Naive thymus-derived CD4-positive, alpha-beta T cell (primary cell): ENCODE measurements at regions of chr3 and their contacts with region 1.

Region 1: DNA sequence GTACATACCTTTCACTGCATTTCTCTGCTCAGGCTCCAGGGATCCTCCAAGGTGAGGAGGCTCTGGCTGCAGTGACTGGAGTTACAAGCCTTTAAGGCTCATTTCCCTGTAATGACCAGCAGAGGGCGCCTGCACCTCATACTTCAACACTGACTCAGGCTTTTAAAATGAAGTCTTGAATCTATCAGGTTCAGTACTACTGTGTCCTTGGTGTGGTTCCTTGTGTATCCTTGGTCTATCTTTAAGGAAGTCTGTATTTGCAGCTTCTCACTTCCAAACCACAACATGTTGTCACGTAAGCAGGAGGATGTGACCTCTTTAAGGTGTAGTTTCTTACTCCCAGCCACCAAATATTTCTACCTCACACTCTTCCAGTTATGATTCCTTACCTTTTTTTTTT is 122.5 kb upstream of the ZBED2 start:
- DNase-seq: peak; percentile 27 to 69 (median 60)
- ATAC-seq: peak; percentile 95
- H3K4me3 ChIP-seq: no peak overlapping the region
- H3K4me3 Mint-ChIP-seq: no peak overlapping the region
- H3K27ac ChIP-seq: no peak overlapping the region
- H3K27ac Mint-ChIP-seq: peak overlapping the region in 5 of 9 donors; percentile 6 to 81 (median 76)
- H3K4me1 ChIP-seq: peaks cover 0 to 5% of the 10 kb centered on the region in 2 donors
- H3K4me1 Mint-ChIP-seq: peaks cover 0 to 6% (median 6%) of the 10 kb centered on the region in 7 donors
- H3K27me3 ChIP-seq: no peaks in the 10 kb centered on the region
- H3K27me3 Mint-ChIP-seq: no peaks in the 10 kb centered on the region

Region 2: DNA sequence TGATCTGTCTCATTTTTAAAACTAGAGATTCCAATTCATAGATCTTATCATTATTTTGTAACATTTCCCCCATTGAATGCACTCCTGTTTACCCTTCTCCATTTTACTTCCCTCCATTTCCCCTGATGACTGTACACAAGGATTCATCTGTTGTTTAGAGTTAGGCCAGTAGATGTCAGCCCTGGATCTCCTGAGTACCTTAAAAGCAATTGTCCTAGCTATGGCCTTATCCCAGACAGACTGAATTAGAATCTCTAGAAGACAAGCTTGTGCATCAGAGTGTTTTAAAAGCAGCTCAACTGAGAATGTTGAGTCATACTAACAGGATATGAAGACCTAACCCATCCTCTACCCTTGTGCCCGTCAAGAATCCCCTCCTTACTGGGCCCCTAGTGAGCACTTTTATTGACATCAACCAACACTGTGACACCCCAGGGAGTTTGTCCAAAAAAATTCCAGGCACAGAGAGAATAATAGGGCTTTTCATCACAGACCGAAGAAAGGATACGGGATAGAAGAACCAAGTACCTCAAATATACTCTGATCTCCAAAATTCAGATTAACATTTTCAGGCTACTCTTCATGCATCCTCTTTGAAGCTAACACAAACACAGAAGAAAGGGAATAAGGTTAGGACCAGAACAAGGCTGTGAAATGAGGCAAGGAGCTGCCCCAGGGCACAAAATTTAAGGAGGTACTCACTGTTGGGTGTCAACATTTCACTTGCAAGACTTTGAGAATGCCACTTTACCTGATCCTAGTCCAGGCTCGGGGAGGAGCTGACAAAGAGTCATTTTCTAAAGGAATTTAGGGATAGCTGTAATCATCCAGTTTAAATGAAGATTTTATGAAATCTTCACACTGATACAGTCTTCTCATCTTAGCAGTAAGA is 139.6 kb before region 1 on chr3:
- CTCF ChIA-PET with region 1: no interaction called
- POLR2A ChIA-PET with region 1: no interaction called
- intact Hi-C with region 1: loop called in 1 of 2 experiments (anchors 5 kb)
- DNase-seq: peak in 1 of 9 donors; percentile 7
- ATAC-seq: peak; percentile 71
- H3K4me3 ChIP-seq: no peak overlapping the region
- H3K4me3 Mint-ChIP-seq: peak overlapping the region in 1 of 10 donors; percentile 13
- H3K27ac ChIP-seq: no peak overlapping the region
- H3K27ac Mint-ChIP-seq: peak overlapping the region in 8 of 9 donors; percentile 27 to 83 (median 60)
- H3K4me1 ChIP-seq: no peaks in the 10 kb centered on the region
- H3K4me1 Mint-ChIP-seq: peaks cover 18 to 72% (median 61%) of the 10 kb centered on the region in 7 donors
- H3K27me3 ChIP-seq: no peaks in the 10 kb centered on the region
- H3K27me3 Mint-ChIP-seq: no peaks in the 10 kb centered on the region

Region 3: DNA sequence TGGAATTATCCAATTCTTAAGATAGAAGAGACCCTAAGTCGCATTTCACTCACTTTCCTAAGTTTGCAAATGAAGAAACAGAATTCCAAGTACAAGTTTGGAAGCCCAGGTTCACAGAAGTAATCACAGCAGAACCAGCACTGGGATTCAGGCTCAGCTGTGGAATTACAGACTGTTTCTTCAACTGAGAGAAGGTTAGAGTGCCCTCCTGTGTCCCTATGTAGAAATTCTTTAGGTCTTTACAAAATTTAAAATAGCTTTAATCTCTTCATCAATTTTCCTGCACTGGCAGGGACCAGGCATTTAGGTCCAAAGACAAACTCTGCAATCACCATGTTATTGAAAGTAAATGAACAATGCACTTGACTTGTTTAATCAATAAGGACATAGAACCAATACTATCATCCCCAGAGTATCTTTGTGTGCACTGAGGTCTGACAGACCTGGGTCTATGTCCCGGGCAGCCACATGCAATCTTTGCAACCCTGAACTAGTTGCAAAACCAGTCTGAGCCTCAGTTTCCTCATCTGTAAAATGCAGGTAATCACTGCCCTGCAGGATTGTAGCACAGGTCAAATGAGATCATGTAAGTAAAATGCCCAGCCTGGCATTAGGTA is 26.2 kb before region 1 on chr3:
- CTCF ChIA-PET with region 1: interaction called, 14 read pairs
- POLR2A ChIA-PET with region 1: no interaction called
- intact Hi-C with region 1: no loop called
- DNase-seq: peak in 6 of 9 donors; percentile 17 to 46 (median 36)
- ATAC-seq: peak; percentile 64
- H3K4me3 ChIP-seq: no peak overlapping the region
- H3K4me3 Mint-ChIP-seq: no peak overlapping the region
- H3K27ac ChIP-seq: no peak overlapping the region
- H3K27ac Mint-ChIP-seq: peak overlapping the region in 2 of 9 donors; percentile 38 to 62
- H3K4me1 ChIP-seq: peaks cover 5 to 12% of the 10 kb centered on the region in 2 donors
- H3K4me1 Mint-ChIP-seq: peaks cover 5 to 66% (median 58%) of the 10 kb centered on the region in 7 donors
- H3K27me3 ChIP-seq: no peaks in the 10 kb centered on the region
- H3K27me3 Mint-ChIP-seq: no peaks in the 10 kb centered on the region

Region 4: GRCh38 chr3:111859974-111860859 is 142.6 kb after region 1 on chr3:
- CTCF ChIA-PET with region 1: no interaction called
- POLR2A ChIA-PET with region 1: no interaction called
- intact Hi-C with region 1: loop called (anchors 5 kb)
- DNase-seq: peak; percentile 8 to 46 (median 23)
- ATAC-seq: peak; percentile 68
- H3K4me3 ChIP-seq: peak overlapping the region; percentile 60
- H3K4me3 Mint-ChIP-seq: peak overlapping the region; percentile 83 to 96 (median 91)
- H3K27ac ChIP-seq: no peak overlapping the region
- H3K27ac Mint-ChIP-seq: peak overlapping the region in 3 of 9 donors; percentile 38 to 60 (median 56)
- H3K4me1 ChIP-seq: peaks cover 5 to 12% of the 10 kb centered on the region in 2 donors
- H3K4me1 Mint-ChIP-seq: peaks cover 10 to 21% (median 13%) of the 10 kb centered on the region in 7 donors
- H3K27me3 ChIP-seq: peaks cover 0 to 6% of the 10 kb centered on the region in 2 donors
- H3K27me3 Mint-ChIP-seq: peaks cover 36 to 82% (median 68%) of the 10 kb centered on the region in 5 donors

Region 5: DNA sequence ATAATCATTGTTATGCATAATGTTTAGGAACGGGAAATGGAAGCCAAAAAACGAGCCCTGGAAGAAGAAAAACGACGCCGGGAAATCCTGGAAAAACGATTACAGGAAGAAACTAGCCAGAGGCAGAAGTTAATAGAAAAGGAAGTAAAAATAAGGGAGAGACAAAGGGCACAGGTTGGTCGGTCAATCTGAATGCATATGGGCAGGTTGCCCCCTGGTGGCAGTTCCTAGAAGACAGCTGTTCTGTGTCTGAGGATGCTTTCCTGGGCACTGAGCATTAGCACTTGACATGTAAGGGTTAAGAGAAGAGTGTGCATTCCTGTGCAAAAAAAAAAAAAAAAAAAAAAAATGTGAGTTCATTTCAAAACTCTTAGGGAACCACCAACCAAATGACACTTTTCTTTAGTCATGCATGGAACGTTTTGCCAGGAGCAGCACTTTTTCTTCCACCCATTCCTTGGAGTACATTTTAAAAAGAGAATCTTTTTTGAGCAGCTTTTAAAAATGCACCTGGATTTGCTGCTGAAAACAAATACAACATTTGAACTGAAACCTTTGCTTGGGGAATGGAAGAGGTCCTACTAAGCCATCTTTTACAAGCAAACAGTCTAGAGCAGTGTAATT is 250.2 kb after region 1 on chr3:
- CTCF ChIA-PET with region 1: interaction called, 111 read pairs
- POLR2A ChIA-PET with region 1: interaction called, 3 read pairs
- intact Hi-C with region 1: loop called (anchors 1 kb)
- DNase-seq: peak; percentile 44 to 72 (median 64)
- ATAC-seq: peak; percentile 96
- H3K4me3 ChIP-seq: no peak overlapping the region
- H3K4me3 Mint-ChIP-seq: peak overlapping the region in 2 of 10 donors; percentile 12 to 44
- H3K27ac ChIP-seq: no peak overlapping the region
- H3K27ac Mint-ChIP-seq: peak overlapping the region in 1 of 9 donors; percentile 71
- H3K4me1 ChIP-seq: peaks cover 0 to 4% of the 10 kb centered on the region in 2 donors
- H3K4me1 Mint-ChIP-seq: peaks cover 3 to 13% (median 5%) of the 10 kb centered on the region in 7 donors
- H3K27me3 ChIP-seq: no peaks in the 10 kb centered on the region
- H3K27me3 Mint-ChIP-seq: no peaks in the 10 kb centered on the region

Region 6: DNA sequence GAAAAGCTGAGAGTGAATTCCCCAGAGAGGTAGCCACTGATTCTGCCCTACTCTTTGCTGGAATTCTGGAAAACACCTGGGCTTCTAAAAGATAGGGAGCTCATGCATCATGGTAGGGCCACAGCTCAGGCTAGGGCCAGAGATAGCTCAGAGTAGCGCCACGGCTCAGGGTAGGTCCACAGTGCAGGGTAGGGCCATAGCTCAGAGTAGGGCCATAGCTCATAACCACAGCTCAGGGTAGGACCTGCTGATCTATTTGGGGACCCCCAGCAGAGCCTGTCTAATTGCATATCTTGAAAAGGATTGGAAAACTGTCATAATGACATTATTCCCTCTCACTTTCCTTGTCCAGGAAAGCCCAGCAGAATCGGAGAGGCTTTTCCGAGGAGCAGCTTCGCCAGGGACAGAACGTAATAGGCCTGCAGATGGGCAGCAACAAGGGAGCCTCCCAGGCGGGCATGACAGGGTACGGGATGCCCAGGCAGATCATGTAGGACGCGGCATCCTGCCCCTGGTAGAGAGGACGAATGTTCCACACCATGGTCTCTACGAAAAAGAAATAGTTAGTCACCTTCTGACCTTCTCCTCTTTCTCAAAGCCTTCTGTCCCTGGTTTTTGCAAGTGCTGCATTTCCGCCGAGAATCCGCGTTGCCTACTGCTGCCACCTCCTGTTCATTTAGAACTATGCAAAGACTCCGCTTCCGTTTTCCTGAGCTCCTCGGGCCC is 295.6 kb after region 1 on chr3:
- CTCF ChIA-PET with region 1: interaction called, 92 read pairs
- POLR2A ChIA-PET with region 1: interaction called, 3 read pairs
- intact Hi-C with region 1: loop called (anchors 1 kb)
- DNase-seq: peak in 8 of 9 donors; percentile 30 to 63 (median 55)
- ATAC-seq: peak; percentile 88
- H3K4me3 ChIP-seq: no peak overlapping the region
- H3K4me3 Mint-ChIP-seq: peak overlapping the region in 4 of 10 donors; percentile 24 to 70 (median 26)
- H3K27ac ChIP-seq: no peak overlapping the region
- H3K27ac Mint-ChIP-seq: peak overlapping the region in 2 of 9 donors; percentile 42 to 83
- H3K4me1 ChIP-seq: no peaks in the 10 kb centered on the region
- H3K4me1 Mint-ChIP-seq: peaks cover 0 to 20% (median 10%) of the 10 kb centered on the region in 7 donors
- H3K27me3 ChIP-seq: no peaks in the 10 kb centered on the region
- H3K27me3 Mint-ChIP-seq: no peaks in the 10 kb centered on the region

Region 7: GRCh38 chr3:112043603-112044201 is 326.1 kb after region 1 on chr3:
- CTCF ChIA-PET with region 1: interaction called, 3 read pairs
- POLR2A ChIA-PET with region 1: no interaction called
- intact Hi-C with region 1: loop called (anchors 1 kb)
- DNase-seq: peak in 8 of 9 donors; percentile 29 to 70 (median 58)
- ATAC-seq: peak; percentile 95
- H3K4me3 ChIP-seq: no peak overlapping the region
- H3K4me3 Mint-ChIP-seq: no peak overlapping the region
- H3K27ac ChIP-seq: no peak overlapping the region
- H3K27ac Mint-ChIP-seq: no peak overlapping the region
- H3K4me1 ChIP-seq: no peaks in the 10 kb centered on the region
- H3K4me1 Mint-ChIP-seq: no peaks in the 10 kb centered on the region
- H3K27me3 ChIP-seq: no peaks in the 10 kb centered on the region
- H3K27me3 Mint-ChIP-seq: peaks cover 0 to 3% (median 0%) of the 10 kb centered on the region in 5 donors